Cardiac septum (tissue), 1 donor: ENCODE measurements at regions of chr16 and their contacts with region 1.

Region 1: GRCh38 chr16:57720142-57720575 is 15.4 kb upstream of the KATNB1 start:
- DNase-seq: peak; percentile 84

Region 2: GRCh38 chr16:57576429-57576870 is 143.7 kb before region 1 on chr16:
- intact Hi-C with region 1: loop called (anchors 5 kb)
- DNase-seq: no peak

Region 3: GRCh38 chr16:57591086-57591869 is 128.9 kb before region 1 on chr16:
- intact Hi-C with region 1: loop called (anchors 5 kb)
- DNase-seq: peak; percentile 88

Region 4: DNA sequence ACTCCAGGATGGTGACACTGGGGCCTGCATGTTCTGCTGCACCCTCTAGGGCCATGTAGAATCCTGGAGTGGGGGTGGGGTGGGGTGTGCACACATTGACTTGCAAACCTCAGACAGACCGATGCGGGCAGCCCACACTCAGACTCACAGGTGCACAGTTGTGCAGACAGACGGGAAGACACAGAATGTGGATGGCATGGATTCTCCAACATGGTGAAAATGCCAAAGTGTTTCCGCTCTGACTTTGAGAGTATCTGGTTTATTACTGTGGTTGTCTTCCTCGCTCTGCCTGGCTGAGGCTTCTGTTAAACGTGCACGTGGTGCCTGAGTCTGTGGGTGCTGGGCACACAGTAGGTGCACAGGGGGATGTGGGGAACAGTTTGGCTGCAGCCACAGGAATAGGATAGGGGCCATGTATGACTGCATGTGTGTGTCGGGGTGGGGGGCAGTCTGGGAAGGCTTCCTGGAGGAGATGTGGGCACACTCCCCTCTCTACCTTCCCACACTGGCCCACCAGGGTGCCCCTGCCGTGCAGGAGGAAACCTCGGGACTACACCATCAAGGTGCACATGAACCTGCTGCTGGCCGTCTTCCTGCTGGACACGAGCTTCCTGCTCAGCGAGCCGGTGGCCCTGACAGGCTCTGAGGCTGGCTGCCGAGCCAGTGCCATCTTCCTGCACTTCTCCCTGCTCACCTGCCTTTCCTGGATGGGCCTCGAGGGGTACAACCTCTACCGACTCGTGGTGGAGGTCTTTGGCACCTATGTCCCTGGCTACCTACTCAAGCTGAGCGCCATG is 61.1 kb before region 1 on chr16:
- intact Hi-C with region 1: loop called (anchors 5 kb)
- DNase-seq: no peak